Activated naive CD8-positive, alpha-beta T cell treated with anti-CD3 and anti-CD28 coated beads, Interleukin-2, amount 10 ng/mL, durations not matched to agents 7 days and 5 days (primary cell): ENCODE measurements at regions of chr10 and their contacts with region 1.

Region 1: DNA sequence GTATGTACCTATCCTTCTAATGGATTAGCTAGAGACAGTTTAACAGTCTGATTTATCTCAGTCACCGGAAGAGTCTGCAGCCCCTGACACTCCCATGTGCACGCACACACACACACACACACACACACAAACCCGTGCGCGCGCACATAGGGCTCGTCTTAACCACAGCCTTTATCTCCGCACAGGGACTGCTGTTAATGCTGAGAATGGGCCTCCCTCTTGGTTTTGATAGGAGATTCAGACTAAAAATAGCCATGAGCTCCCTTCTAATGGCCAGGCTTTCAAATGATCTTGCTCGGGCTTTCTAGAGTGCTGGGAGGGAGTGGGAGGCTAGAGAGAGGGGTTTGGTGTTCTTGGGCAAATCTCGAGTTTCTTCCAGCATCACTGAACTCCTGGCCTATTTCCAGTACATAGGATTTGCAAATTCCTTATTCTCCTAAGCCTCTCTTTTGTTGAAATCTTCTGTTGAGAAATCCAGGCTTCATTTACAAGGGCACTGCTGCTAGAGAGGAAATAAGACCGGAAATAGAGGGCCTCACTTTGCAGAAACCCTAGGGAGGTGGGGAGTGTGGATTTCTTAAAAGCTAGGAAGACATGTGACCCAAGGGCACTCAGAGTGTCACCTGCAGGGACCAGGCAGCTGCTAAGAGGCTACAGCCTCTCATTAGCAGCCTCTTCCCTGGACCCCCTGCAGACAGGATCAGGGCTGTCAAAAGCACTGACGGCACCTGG is 2.4 kb downstream of the TMEM72 start:
- DNase-seq: no peak
- ATAC-seq: peak; percentile 95
- H3K4me3 Mint-ChIP-seq: peak overlapping the region; percentile 60
- H3K27ac Mint-ChIP-seq: peak overlapping the region; percentile 91
- H3K4me1 Mint-ChIP-seq: peaks cover 16% of the 10 kb centered on the region
- H3K27me3 Mint-ChIP-seq: peaks cover 7% of the 10 kb centered on the region

Region 2: GRCh38 chr10:44878706-44879530 is 34.6 kb before region 1 on chr10:
- POLR2A ChIA-PET with region 1: interaction called, 11 read pairs
- DNase-seq: peak; percentile 82
- ATAC-seq: peak; percentile 87
- H3K4me3 Mint-ChIP-seq: peak overlapping the region; percentile 80
- H3K27ac Mint-ChIP-seq: peak overlapping the region; percentile 27
- H3K4me1 Mint-ChIP-seq: peaks cover 22% of the 10 kb centered on the region
- H3K27me3 Mint-ChIP-seq: peaks cover 11% of the 10 kb centered on the region

Region 3: GRCh38 chr10:44932517-44933450 is 19.3 kb after region 1 on chr10:
- POLR2A ChIA-PET with region 1: no interaction called
- DNase-seq: peak; percentile 92
- ATAC-seq: peak; percentile 99
- H3K4me3 Mint-ChIP-seq: no peak overlapping the region
- H3K27ac Mint-ChIP-seq: peak overlapping the region; percentile 61
- H3K4me1 Mint-ChIP-seq: peaks cover 15% of the 10 kb centered on the region
- H3K27me3 Mint-ChIP-seq: no peaks in the 10 kb centered on the region